Ovary (tissue), 10 donors: ENCODE measurements at regions of chr6 and their contacts with region 1.

Region 1: DNA sequence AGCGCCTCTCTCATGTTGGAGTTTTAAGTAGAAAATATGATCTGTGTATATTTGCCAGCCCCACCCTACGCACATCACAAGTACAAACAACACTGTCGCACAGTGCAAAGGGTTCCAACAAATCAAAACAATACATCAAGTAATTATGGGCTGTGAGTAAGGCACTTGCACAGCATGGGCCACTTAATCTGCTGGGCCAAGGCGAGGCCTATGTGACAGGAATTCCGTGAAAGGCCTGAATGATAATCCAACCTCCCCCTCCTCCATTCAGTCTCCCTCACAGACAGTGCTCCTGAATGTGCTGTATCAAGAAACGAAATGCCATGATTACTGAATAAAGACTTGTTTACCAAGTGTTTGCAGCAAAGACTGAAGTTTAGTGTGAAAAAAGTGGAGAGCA is 130.1 kb upstream of the SLC2A12 start:
- DNase-seq: no peak
- H3K4me3 ChIP-seq: no peak overlapping the region
- H3K27ac ChIP-seq: no peak overlapping the region
- H3K4me1 ChIP-seq: peaks cover 5% of the 10 kb centered on the region
- H3K27me3 ChIP-seq: no peaks in the 10 kb centered on the region
- CTCF ChIP-seq: no peak
- EP300 ChIP-seq: no peak
- POLR2A ChIP-seq: no peak

Region 2: GRCh38 chr6:134235937-134236751 is 53.6 kb after region 1 on chr6:
- intact Hi-C with region 1: loop called in 1 of 4 experiments (anchors 10 kb)
- DNase-seq: no peak
- H3K4me3 ChIP-seq: no peak overlapping the region
- H3K27ac ChIP-seq: no peak overlapping the region
- H3K4me1 ChIP-seq: peaks cover 4% of the 10 kb centered on the region
- H3K27me3 ChIP-seq: no peaks in the 10 kb centered on the region
- CTCF ChIP-seq: no peak
- EP300 ChIP-seq: no peak
- POLR2A ChIP-seq: no peak